HEK293 (cell line): ENCODE measurements at regions of chr17 and their contacts with region 1.

Region 1: DNA sequence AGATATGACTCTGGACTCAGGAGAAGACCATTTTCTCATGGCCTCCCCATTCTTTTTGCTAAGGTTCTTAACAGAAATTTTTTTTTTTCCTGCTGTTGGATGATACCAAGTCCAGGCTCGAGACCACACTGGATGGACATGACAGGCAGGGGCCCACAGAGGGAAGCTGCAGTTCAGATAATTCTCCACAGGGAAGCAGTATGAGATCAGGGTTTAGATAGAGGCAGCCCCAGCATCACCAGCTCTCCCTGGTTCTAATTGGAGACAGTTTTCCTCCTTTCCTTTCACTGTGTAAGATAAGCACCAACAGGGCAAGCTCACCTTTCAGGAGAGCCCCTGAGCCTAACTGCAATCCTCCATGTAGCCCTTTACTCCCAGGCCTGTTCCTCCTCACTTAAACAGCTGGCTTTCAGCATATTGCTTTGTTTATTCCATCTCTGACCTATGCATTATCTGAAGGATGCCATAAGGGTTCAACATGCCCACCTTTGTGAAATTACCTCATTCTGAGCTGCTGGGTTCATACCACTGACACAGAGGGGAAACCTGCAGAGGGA is 108.1 kb downstream of the SNX11 start:
- H3K4me3 ChIP-seq: no peak overlapping the region
- H3K27ac ChIP-seq: no peak overlapping the region
- H3K4me1 ChIP-seq: peaks cover 6% of the 10 kb centered on the region
- CTCF ChIP-seq: peak; percentile 75

Region 2: GRCh38 chr17:48153691-48154358 is 61.8 kb before region 1 on chr17:
- CTCF ChIA-PET with region 1: interaction called, 11 read pairs
- POLR2A ChIA-PET with region 1: interaction called, 3 read pairs
- H3K4me3 ChIP-seq: no peak overlapping the region
- H3K27ac ChIP-seq: peak overlapping the region; percentile 29
- H3K4me1 ChIP-seq: peaks cover 23% of the 10 kb centered on the region
- CTCF ChIP-seq: peak; percentile 78

Region 3: DNA sequence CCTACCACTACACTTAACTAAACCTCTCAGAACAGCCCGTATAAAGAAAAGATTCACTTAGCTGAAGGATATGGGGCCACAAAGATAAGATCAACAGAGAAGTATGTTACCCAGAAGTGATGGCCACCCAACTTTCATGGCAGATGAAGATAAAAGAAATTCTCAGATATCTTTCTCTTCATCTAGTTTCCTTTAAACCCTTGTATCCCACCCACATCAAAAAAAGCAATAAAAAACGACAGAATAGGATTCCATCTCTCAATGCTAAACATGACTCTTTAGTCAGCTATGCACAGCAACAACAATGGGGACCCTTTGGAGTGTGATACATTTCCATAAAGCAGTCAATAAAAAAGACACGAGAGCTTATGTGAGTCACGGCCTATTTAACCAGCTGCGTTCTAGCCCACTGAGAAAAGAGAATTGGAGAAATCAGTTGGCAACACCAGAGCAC is 21.5 kb before region 1 on chr17:
- CTCF ChIA-PET with region 1: interaction called, 10 read pairs
- POLR2A ChIA-PET with region 1: no interaction called
- H3K4me3 ChIP-seq: no peak overlapping the region
- H3K27ac ChIP-seq: no peak overlapping the region
- H3K4me1 ChIP-seq: peaks cover 17% of the 10 kb centered on the region
- CTCF ChIP-seq: no peak

Region 4: GRCh38 chr17:48241131-48241591 is 25.5 kb after region 1 on chr17:
- CTCF ChIA-PET with region 1: interaction called, 14 read pairs
- POLR2A ChIA-PET with region 1: no interaction called
- H3K4me3 ChIP-seq: no peak overlapping the region
- H3K27ac ChIP-seq: peak overlapping the region; percentile 71; the same call in 1 of the 2 replicates
- H3K4me1 ChIP-seq: peaks cover 65% of the 10 kb centered on the region
- CTCF ChIP-seq: no peak

Region 5: GRCh38 chr17:48307814-48308411 is 92.3 kb after region 1 on chr17:
- CTCF ChIA-PET with region 1: interaction called, 18 read pairs
- POLR2A ChIA-PET with region 1: no interaction called
- H3K4me3 ChIP-seq: no peak overlapping the region
- H3K27ac ChIP-seq: no peak overlapping the region
- H3K4me1 ChIP-seq: peaks cover 6% of the 10 kb centered on the region
- CTCF ChIP-seq: peak; percentile 47; the same call in 1 of the 2 replicates

Region 6: GRCh38 chr17:48593840-48594537 is 378.3 kb after region 1 on chr17:
- CTCF ChIA-PET with region 1: interaction called, 17 read pairs
- POLR2A ChIA-PET with region 1: no interaction called
- H3K4me3 ChIP-seq: no peak overlapping the region; the same call in 1 of the 2 replicates
- H3K27ac ChIP-seq: peak overlapping the region; percentile 68
- H3K4me1 ChIP-seq: peaks cover 31% of the 10 kb centered on the region
- CTCF ChIP-seq: peak; percentile 98